Activated T-helper 2 cell treated with anti-CD3 and anti-CD28 coated beads, Interferon-gamma antibody, Interleukin-2, Interleukin-4, amounts not matched to agents 10 μg/mL and 5 μg/mL and 100 μg/mL, durations not matched to agents 14 hours and 24 hours and 36 hours (primary cell): ENCODE measurements at regions of chr9 and their contacts with region 1.

Region 1: DNA sequence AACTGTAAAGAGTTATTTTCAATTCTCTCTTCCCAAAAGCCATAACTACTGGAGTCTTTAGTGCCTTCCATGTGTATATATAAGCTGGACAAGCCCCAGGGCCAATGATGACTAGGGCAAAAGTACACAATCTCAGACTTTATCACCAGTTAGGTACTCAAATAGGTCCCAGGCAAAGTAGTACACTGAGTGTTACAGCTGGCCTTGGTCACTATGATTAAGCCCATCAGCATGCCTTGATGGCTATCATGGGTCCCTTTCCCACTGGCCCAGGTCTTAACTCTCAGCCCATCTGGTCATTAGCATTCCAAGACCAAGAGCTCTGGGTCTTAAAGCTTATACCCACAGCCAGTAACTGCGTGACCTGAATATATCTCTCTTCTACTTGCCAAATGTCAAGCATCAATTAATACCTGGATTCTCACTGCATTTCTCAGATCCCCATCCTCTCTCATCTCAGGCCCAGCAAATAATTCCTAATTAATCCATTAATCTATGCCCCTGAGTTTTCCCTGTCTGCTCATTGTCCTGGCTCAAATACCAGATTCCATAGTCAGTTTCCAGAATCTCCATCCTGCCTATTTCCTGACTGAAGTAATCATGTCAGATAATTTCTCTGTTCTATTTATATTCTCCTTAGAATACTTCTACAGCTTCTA is 62.3 kb downstream of the NR6A1 start:
- DNase-seq: no peak
- H3K4me3 Mint-ChIP-seq: no peak overlapping the region
- H3K27ac Mint-ChIP-seq: no peak overlapping the region
- H3K4me1 Mint-ChIP-seq: peaks cover 6% of the 10 kb centered on the region
- H3K27me3 Mint-ChIP-seq: peaks cover 16% of the 10 kb centered on the region

Region 2: GRCh38 chr9:124617471-124618141 is 91.2 kb before region 1 on chr9:
- intact Hi-C with region 1: loop called (anchors 1 kb)
- DNase-seq: peak; percentile 57
- H3K4me3 Mint-ChIP-seq: no peak overlapping the region
- H3K27ac Mint-ChIP-seq: no peak overlapping the region
- H3K4me1 Mint-ChIP-seq: peaks cover 9% of the 10 kb centered on the region
- H3K27me3 Mint-ChIP-seq: peaks cover 7% of the 10 kb centered on the region

Region 3: GRCh38 chr9:124754289-124754688 is 45.5 kb after region 1 on chr9:
- intact Hi-C with region 1: loop called (anchors 1 kb)
- DNase-seq: no peak
- H3K4me3 Mint-ChIP-seq: no peak overlapping the region
- H3K27ac Mint-ChIP-seq: no peak overlapping the region
- H3K4me1 Mint-ChIP-seq: peaks cover 15% of the 10 kb centered on the region
- H3K27me3 Mint-ChIP-seq: peaks cover 59% of the 10 kb centered on the region

Region 4: GRCh38 chr9:124852829-124853531 is 144.2 kb after region 1 on chr9 and contains the start of gene WDR38:
- intact Hi-C with region 1: loop called (anchors 2 kb)
- DNase-seq: peak; percentile 74
- H3K4me3 Mint-ChIP-seq: peak within 1 kb of the TSS; percentile 66
- H3K27ac Mint-ChIP-seq: no peak within 1 kb of the TSS
- H3K4me1 Mint-ChIP-seq: peaks cover 6% of the 10 kb centered on the region
- H3K27me3 Mint-ChIP-seq: peaks cover 8% of the 10 kb centered on the region
- total RNA-seq, gene WDR38: not detected in 2 replicates

Region 5: DNA sequence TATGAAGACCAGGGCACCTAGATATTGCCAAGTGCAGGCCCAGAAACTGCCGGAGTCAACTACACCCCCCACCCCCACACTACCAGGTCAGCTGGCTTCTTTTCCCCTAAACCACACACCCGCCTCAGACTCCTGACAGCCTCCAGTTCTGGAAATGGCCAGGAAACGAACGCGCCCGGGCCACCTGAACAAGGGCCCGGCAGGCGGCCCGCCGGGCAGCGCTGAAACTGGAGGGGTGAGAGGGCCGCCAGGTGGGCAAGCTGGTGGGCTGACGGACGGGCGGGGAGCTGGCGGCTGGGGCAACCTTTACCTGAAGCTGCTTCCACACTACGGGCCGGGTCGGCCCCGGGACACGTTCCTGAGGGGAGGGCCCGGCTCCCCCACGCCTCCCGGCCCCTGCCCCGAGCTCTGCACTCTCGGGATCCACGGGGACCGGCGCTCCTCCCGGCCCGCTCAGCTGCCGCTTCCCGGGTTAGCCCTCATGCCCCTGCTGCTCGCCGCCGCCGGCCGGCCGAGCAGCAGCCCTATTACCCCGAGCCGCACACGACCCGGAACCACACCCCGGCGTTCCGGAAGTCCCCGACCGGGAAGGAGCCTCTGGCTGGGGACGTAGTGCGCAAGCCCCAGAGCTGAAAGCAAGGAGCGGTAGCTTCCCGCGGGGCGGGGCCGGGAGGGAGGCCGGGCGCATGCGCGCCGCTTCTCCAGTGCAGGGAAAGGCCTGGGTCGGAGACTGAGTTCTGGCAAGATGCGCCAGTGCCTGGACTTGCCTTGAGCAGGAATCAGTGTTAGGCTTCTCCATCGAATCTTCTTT is 998.1 kb after region 1 on chr9 and contains the start of gene MAPKAP1:
- intact Hi-C with region 1: no loop called
- DNase-seq: peak; percentile 89
- H3K4me3 Mint-ChIP-seq: peak within 1 kb of the TSS; percentile 85
- H3K27ac Mint-ChIP-seq: peak within 1 kb of the TSS; percentile 78
- H3K4me1 Mint-ChIP-seq: peaks cover 29% of the 10 kb centered on the region
- H3K27me3 Mint-ChIP-seq: no peaks in the 10 kb centered on the region
- total RNA-seq, gene MAPKAP1: 77.9 and 83.8 TPM in 2 replicates